Endothelial cell of umbilical vein (primary cell): ENCODE measurements at regions of chr2 and their contacts with region 1.

Region 1: GRCh38 chr2:27954771-27955383 is 64.3 kb downstream of the BABAM2 start:
- DNase-seq: peak; percentile 99
- H3K4me3 ChIP-seq: no peak overlapping the region
- H3K27ac ChIP-seq: peak overlapping the region; percentile 95
- H3K4me1 ChIP-seq: peaks cover 47% of the 10 kb centered on the region
- H3K27me3 ChIP-seq: no peaks in the 10 kb centered on the region
- CTCF ChIP-seq: peak; percentile 33 to 37
- POLR2A ChIP-seq: peak; percentile 94

Region 2: DNA sequence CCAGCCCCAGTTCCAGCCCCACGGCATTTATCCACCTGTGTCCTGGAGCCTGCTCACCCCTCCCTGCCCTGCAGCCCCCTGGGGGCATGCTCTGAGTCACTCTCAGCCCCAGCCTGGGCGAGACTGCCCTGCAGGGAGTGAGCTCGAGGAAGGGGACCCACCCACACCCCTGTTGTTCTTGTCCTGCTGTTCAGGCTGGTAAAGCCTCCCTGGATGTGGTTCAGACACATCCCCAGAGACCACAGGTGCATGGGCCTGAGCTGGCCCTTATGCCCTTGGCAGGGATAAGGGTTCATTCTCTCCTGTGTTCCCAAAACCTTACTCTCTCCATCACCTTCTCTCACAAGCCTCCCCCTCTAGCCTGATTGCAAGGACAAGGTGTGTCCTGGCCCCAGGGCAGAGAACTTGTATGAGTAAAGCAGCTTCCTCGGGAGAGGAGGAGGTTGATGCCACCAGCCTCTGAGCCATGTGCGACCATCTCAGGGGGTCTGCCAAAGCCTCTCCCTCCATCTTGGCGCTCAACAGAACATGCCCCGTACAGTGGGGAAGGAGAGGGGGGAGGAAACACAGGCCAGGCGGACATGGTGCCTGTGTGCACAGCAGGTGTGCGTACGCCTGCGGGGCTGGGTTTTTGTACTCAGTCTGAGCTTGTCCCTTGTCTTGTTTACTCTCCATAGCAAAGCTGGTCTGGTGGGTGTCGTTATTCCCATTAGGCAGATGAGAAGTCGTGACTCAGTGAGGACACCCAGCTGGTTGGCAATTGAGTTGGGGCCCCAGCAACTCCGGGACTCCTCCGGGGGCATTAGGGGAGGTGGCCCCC is 1378.1 kb before region 1 on chr2:
- CTCF ChIA-PET with region 1: no interaction called
- POLR2A ChIA-PET with region 1: no interaction called
- dilution Hi-C with region 1: no loop called
- intact Hi-C with region 1: no loop called
- DNase-seq: no peak
- H3K4me3 ChIP-seq: no peak overlapping the region
- H3K27ac ChIP-seq: no peak overlapping the region
- H3K4me1 ChIP-seq: no peaks in the 10 kb centered on the region
- H3K27me3 ChIP-seq: peaks cover 3 to 11% of the 10 kb centered on the region in 2 experiments
- CTCF ChIP-seq: no peak
- POLR2A ChIP-seq: no peak

Region 3: GRCh38 chr2:27754138-27754588 is 200.7 kb before region 1 on chr2:
- CTCF ChIA-PET with region 1: interaction called, 11 read pairs
- POLR2A ChIA-PET with region 1: no interaction called
- dilution Hi-C with region 1: no loop called
- intact Hi-C with region 1: loop called (anchors 1 kb)
- DNase-seq: peak; percentile 81
- H3K4me3 ChIP-seq: no peak overlapping the region
- H3K27ac ChIP-seq: no peak overlapping the region
- H3K4me1 ChIP-seq: no peaks in the 10 kb centered on the region
- H3K27me3 ChIP-seq: no peaks in the 10 kb centered on the region
- CTCF ChIP-seq: peak; percentile 94 to 97
- POLR2A ChIP-seq: no peak

Region 4: DNA sequence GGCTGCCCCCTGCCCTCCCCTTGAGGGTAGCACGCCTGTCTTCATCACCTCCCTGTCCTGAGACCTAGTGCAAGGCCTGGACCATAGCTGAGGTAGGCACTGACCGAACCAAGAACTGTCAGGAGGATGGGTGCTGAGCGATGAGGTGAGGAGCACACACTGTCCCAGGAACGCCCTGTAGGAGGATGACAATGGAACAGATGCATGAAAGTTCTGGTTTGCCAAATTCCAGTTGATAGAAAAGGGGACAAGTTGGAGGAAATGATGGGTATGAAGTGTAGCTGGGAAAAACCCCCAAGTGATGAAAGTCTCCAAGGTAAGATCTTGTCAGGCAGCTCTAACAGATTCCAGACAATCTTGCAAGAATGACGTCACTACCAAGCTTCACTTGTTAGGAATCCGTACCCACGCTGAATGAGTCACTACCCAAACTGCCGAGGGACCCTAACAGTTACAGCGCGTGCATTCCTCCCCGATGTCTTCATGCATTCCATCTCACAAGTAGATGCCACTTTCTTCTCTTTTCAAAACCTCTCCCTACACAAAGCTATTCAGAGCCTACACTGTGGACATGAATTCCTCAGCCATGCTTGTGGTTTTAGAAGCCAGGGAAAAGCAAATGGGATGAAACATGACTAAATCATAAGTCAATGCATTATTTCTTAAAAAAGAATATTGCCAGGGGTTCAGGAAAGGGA is 155.8 kb before region 1 on chr2:
- CTCF ChIA-PET with region 1: no interaction called
- POLR2A ChIA-PET with region 1: no interaction called
- dilution Hi-C with region 1: no loop called
- intact Hi-C with region 1: loop called (anchors 2 kb)
- DNase-seq: peak; percentile 93
- H3K4me3 ChIP-seq: no peak overlapping the region
- H3K27ac ChIP-seq: peak overlapping the region; percentile 94
- H3K4me1 ChIP-seq: peaks cover 34% of the 10 kb centered on the region
- H3K27me3 ChIP-seq: no peaks in the 10 kb centered on the region
- CTCF ChIP-seq: no peak
- POLR2A ChIP-seq: no peak

Region 5: GRCh38 chr2:27890146-27890923 is 64.5 kb before region 1 on chr2 and contains the starts of genes BABAM2 and RBKS:
- CTCF ChIA-PET with region 1: interaction called, 3 read pairs
- POLR2A ChIA-PET with region 1: interaction called, 4 read pairs
- dilution Hi-C with region 1: no loop called
- intact Hi-C with region 1: loop called (anchors 1 kb)
- DNase-seq: peak; percentile 86
- H3K4me3 ChIP-seq: peak within 1 kb of the TSS; percentile 26 to 71 (median 55)
- H3K27ac ChIP-seq: peak within 1 kb of the TSS; percentile 88
- H3K4me1 ChIP-seq: peaks cover 18% of the 10 kb centered on the region
- H3K27me3 ChIP-seq: no peaks in the 10 kb centered on the region
- CTCF ChIP-seq: no peak
- POLR2A ChIP-seq: peak; percentile 62
- total RNA-seq, gene BABAM2: 26.9 and 27.6 TPM in 2 replicates
- total RNA-seq, gene RBKS: 0.64 and 0.74 TPM in 2 replicates

Region 6: GRCh38 chr2:28036307-28036706 is 81.4 kb after region 1 on chr2:
- CTCF ChIA-PET with region 1: no interaction called
- POLR2A ChIA-PET with region 1: no interaction called
- dilution Hi-C with region 1: no loop called
- intact Hi-C with region 1: loop called (anchors 1 kb)
- DNase-seq: peak; percentile 48
- H3K4me3 ChIP-seq: no peak overlapping the region
- H3K27ac ChIP-seq: peak overlapping the region; percentile 33
- H3K4me1 ChIP-seq: peaks cover 18% of the 10 kb centered on the region
- H3K27me3 ChIP-seq: no peaks in the 10 kb centered on the region
- CTCF ChIP-seq: no peak
- POLR2A ChIP-seq: no peak

Region 7: GRCh38 chr2:28102455-28102874 is 147.6 kb after region 1 on chr2:
- CTCF ChIA-PET with region 1: interaction called, 3 read pairs
- POLR2A ChIA-PET with region 1: no interaction called
- dilution Hi-C with region 1: no loop called
- intact Hi-C with region 1: loop called (anchors 1 kb)
- DNase-seq: peak; percentile 91
- H3K4me3 ChIP-seq: peak overlapping the region in 1 of 3 experiments; percentile 29
- H3K27ac ChIP-seq: peak overlapping the region; percentile 63
- H3K4me1 ChIP-seq: peaks cover 23% of the 10 kb centered on the region
- H3K27me3 ChIP-seq: no peaks in the 10 kb centered on the region
- CTCF ChIP-seq: no peak
- POLR2A ChIP-seq: peak; percentile 48

Region 8: DNA sequence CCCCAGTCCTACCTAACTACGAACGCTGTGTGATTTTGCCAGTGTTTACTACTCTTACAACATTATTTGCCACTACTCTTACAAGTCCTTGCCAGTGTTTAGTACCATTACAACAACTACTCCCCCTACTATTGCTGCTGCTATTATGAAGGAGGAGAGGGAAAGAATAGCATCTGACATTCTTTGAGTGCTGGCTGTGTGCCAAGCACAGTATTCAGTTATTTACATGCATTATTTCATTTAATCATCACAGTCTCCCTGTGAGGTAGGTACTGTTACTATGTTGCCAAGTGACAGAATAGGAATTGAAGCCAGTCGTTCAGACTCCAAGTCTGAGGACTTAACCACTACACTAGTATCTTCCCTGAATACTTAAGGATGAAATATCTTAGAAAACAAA is 251.9 kb after region 1 on chr2:
- CTCF ChIA-PET with region 1: no interaction called
- POLR2A ChIA-PET with region 1: no interaction called
- dilution Hi-C with region 1: no loop called
- intact Hi-C with region 1: no loop called
- DNase-seq: peak; percentile 76
- H3K4me3 ChIP-seq: no peak overlapping the region
- H3K27ac ChIP-seq: no peak overlapping the region
- H3K4me1 ChIP-seq: peaks cover 13% of the 10 kb centered on the region
- H3K27me3 ChIP-seq: no peaks in the 10 kb centered on the region
- CTCF ChIP-seq: no peak
- POLR2A ChIP-seq: no peak

Region 9: DNA sequence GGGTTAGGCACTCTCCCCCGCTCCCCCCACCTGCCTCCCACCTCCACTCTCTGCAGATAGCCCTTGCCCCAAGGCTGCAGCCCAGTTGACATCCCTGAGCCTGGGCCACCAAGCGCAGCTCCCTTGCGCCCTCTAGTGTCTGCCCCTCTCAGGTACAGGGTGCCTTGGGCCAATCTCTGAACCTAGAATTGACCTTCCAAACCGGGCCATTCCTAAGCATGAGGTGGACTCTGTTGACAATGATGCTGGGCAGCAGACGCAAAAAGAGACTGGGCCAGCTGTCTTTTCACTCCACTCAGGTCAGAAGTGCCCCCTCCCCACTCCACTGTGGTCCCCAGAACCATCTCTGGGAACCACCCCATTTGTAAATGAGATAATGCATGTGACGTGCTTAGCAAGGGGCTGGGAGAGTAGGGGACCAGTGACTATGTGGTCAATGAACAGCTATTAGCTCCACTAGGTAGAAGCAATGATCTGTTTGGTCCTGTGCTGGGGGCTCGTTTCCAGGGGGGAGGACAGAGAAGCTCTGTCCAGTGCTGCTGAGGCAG is 497.7 kb after region 1 on chr2:
- CTCF ChIA-PET with region 1: no interaction called
- POLR2A ChIA-PET with region 1: no interaction called
- dilution Hi-C with region 1: no loop called
- intact Hi-C with region 1: loop called (anchors 1 kb)
- DNase-seq: peak; percentile 58
- H3K4me3 ChIP-seq: no peak overlapping the region
- H3K27ac ChIP-seq: no peak overlapping the region
- H3K4me1 ChIP-seq: peaks cover 14% of the 10 kb centered on the region
- H3K27me3 ChIP-seq: no peaks in the 10 kb centered on the region
- CTCF ChIP-seq: peak; percentile 94 to 96
- POLR2A ChIP-seq: no peak